Activated CD8-positive, alpha-beta T cell treated with anti-CD3 and anti-CD28 coated beads for 36 hours (primary cell): ENCODE measurements at regions of chr11 and their contacts with region 1.

Region 1: DNA sequence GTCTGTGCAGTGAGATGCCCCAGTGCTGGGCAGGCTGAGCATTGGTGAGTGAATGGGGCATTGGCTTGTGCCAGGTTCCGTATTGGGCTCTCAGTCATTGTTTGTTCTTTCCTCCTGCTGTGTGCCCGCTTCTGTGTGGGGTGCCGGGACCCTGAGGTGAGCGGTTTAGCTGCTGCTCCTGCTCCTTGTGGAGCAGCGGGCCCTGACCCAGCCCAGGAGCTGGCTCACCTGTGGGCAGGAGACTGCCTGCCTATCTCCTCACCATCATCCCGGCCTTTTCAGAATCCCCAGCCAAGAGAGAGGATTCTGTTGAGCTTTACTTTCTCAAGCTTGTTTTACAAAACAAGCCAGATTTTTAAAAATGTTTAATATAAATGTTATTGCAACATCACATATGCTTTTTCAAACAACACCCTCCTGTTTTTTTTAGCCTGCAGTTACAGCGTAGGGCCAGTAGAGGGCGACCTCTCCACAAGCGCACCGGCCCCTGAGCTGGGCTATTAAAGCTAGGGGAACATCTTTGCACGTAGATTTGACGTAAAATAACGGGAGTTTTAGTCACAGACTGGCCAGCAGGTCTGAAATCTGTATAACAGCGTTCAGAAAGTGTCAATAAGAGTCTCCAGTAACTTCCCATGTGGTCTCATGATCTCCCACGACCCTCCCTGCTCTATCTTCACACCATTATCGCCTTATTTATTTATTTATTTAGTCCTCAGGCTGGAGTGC is 25.1 kb upstream of the RELT start:
- DNase-seq: peak; percentile 74
- ATAC-seq: peak; percentile 94
- H3K4me3 Mint-ChIP-seq: no peak overlapping the region
- H3K27ac Mint-ChIP-seq: peak overlapping the region; percentile 41
- H3K4me1 Mint-ChIP-seq: peaks cover 2% of the 10 kb centered on the region
- H3K27me3 Mint-ChIP-seq: no peaks in the 10 kb centered on the region
- CTCF ChIP-seq: peak; percentile 97

Region 2: DNA sequence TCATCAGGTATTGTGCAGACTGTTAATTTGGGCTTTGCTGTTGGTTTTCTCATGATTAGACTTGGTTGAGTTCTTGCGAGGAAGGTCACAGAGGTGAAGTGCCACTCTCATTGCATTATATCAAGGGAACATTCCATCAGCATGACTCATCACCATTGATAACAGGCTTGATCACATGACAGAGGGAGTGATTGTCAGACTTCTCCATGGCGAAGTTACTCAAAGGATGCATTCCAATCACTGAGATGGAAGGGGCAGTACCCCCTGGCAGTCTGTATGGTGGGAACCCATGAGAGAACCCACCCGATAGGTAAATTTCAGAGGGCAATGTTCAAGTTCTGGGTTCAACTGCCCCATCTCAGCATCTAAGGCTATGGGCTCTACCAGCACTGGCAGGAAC is 152.4 kb before region 1 on chr11:
- CTCF ChIA-PET with region 1: no interaction called
- POLR2A ChIA-PET with region 1: no interaction called
- intact Hi-C with region 1: no loop called
- DNase-seq: no peak
- ATAC-seq: no peak
- H3K4me3 Mint-ChIP-seq: no peak overlapping the region
- H3K27ac Mint-ChIP-seq: no peak overlapping the region
- H3K4me1 Mint-ChIP-seq: no peaks in the 10 kb centered on the region
- H3K27me3 Mint-ChIP-seq: no peaks in the 10 kb centered on the region
- CTCF ChIP-seq: no peak

Region 3: GRCh38 chr11:73288873-73289707 is 62.0 kb before region 1 on chr11:
- CTCF ChIA-PET with region 1: interaction called, 14 read pairs
- POLR2A ChIA-PET with region 1: interaction called, 3 read pairs
- intact Hi-C with region 1: no loop called
- DNase-seq: peak; percentile 70
- ATAC-seq: peak; percentile 92
- H3K4me3 Mint-ChIP-seq: no peak overlapping the region
- H3K27ac Mint-ChIP-seq: no peak overlapping the region
- H3K4me1 Mint-ChIP-seq: peaks cover 12% of the 10 kb centered on the region
- H3K27me3 Mint-ChIP-seq: no peaks in the 10 kb centered on the region
- CTCF ChIP-seq: peak; percentile 93

Region 4: GRCh38 chr11:73335204-73335923 is 15.7 kb before region 1 on chr11:
- CTCF ChIA-PET with region 1: interaction called, 42 read pairs
- POLR2A ChIA-PET with region 1: no interaction called
- intact Hi-C with region 1: no loop called
- DNase-seq: peak; percentile 81
- ATAC-seq: peak; percentile 83
- H3K4me3 Mint-ChIP-seq: no peak overlapping the region
- H3K27ac Mint-ChIP-seq: no peak overlapping the region
- H3K4me1 Mint-ChIP-seq: no peaks in the 10 kb centered on the region
- H3K27me3 Mint-ChIP-seq: no peaks in the 10 kb centered on the region
- CTCF ChIP-seq: peak; percentile 100

Region 5: GRCh38 chr11:73384872-73385689 is 34.0 kb after region 1 on chr11:
- CTCF ChIA-PET with region 1: interaction called, 28 read pairs
- POLR2A ChIA-PET with region 1: interaction called, 3 read pairs
- intact Hi-C with region 1: loop called (anchors 5 kb)
- DNase-seq: peak; percentile 67
- ATAC-seq: peak; percentile 84
- H3K4me3 Mint-ChIP-seq: peak overlapping the region; percentile 32
- H3K27ac Mint-ChIP-seq: peak overlapping the region; percentile 72
- H3K4me1 Mint-ChIP-seq: peaks cover 59% of the 10 kb centered on the region
- H3K27me3 Mint-ChIP-seq: no peaks in the 10 kb centered on the region
- CTCF ChIP-seq: no peak

Region 6: GRCh38 chr11:73414977-73415651 is 64.0 kb after region 1 on chr11:
- CTCF ChIA-PET with region 1: interaction called, 15 read pairs
- POLR2A ChIA-PET with region 1: no interaction called
- intact Hi-C with region 1: no loop called
- DNase-seq: no peak
- ATAC-seq: peak; percentile 10
- H3K4me3 Mint-ChIP-seq: no peak overlapping the region
- H3K27ac Mint-ChIP-seq: no peak overlapping the region
- H3K4me1 Mint-ChIP-seq: peaks cover 3% of the 10 kb centered on the region
- H3K27me3 Mint-ChIP-seq: no peaks in the 10 kb centered on the region
- CTCF ChIP-seq: no peak

Region 7: GRCh38 chr11:73528483-73529203 is 177.6 kb after region 1 on chr11:
- CTCF ChIA-PET with region 1: no interaction called
- POLR2A ChIA-PET with region 1: no interaction called
- intact Hi-C with region 1: no loop called
- DNase-seq: no peak
- ATAC-seq: no peak
- H3K4me3 Mint-ChIP-seq: no peak overlapping the region
- H3K27ac Mint-ChIP-seq: no peak overlapping the region
- H3K4me1 Mint-ChIP-seq: peaks cover 28% of the 10 kb centered on the region
- H3K27me3 Mint-ChIP-seq: no peaks in the 10 kb centered on the region
- CTCF ChIP-seq: no peak

Region 8: GRCh38 chr11:73661035-73661628 is 310.1 kb after region 1 on chr11:
- CTCF ChIA-PET with region 1: interaction called, 67 read pairs
- POLR2A ChIA-PET with region 1: no interaction called
- intact Hi-C with region 1: loop called (anchors 5 kb)
- DNase-seq: peak; percentile 87
- ATAC-seq: peak; percentile 94
- H3K4me3 Mint-ChIP-seq: peak overlapping the region; percentile 29
- H3K27ac Mint-ChIP-seq: no peak overlapping the region
- H3K4me1 Mint-ChIP-seq: no peaks in the 10 kb centered on the region
- H3K27me3 Mint-ChIP-seq: no peaks in the 10 kb centered on the region
- CTCF ChIP-seq: peak; percentile 99